Breast epithelium (tissue), 4 donors: ENCODE measurements at regions of chr6 and their contacts with region 1.

Region 1: DNA sequence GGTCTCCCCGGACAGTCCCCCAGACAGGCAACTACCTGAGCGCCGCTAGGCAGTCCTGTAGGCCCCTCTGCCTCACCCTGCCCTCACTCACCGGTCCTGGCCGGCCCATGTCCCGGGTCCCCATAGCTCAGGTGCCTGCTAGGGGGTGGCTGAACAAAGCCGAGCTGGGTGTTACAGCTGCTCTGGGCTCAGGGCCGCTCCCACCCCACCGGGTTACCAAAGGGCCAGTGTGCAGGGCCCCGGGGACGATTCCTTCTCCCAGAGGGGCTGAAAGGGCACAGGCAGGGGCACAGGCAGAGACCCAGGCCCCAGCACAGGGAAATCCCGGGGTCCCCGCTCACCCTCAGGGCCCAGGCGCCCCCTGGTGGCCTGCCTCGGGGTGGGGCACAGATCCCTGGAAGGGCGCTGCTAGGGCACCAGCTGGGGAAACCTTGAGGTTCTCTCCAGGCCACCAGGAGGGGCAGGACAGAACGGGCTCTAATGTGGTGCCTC is 118.4 kb downstream of the GRM4 start:
- DNase-seq: no peak
- H3K4me3 ChIP-seq: no peak overlapping the region
- H3K27ac ChIP-seq: no peak overlapping the region
- H3K4me1 ChIP-seq: no peaks in the 10 kb centered on the region
- H3K27me3 ChIP-seq: no peaks in the 10 kb centered on the region
- CTCF ChIP-seq: peak; percentile 56 to 82 (median 66)
- POLR2A ChIP-seq: no peak

Region 2: DNA sequence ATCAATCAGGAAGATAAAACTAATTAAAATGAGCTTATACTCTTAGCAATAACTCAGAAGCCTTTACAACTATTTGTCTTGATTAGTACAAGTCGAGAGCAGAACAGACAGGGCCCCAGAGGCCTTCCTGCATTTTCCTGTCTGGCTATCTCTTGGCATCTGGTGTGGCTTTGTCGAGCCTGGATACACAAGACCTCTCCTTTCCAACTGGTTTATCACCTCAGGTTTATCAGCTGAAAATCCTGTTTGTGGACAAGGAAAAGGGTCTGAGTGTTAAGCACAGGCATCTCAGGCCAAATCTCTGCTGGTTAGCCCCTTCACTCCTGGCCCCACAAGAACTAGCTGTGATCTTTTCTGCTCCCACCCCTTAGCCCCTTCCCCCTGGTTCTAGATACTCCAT is 480.0 kb before region 1 on chr6:
- intact Hi-C with region 1: no loop called
- DNase-seq: no peak
- H3K4me3 ChIP-seq: no peak overlapping the region
- H3K27ac ChIP-seq: no peak overlapping the region
- H3K4me1 ChIP-seq: no peaks in the 10 kb centered on the region
- H3K27me3 ChIP-seq: no peaks in the 10 kb centered on the region
- CTCF ChIP-seq: no peak
- POLR2A ChIP-seq: no peak

Region 3: DNA sequence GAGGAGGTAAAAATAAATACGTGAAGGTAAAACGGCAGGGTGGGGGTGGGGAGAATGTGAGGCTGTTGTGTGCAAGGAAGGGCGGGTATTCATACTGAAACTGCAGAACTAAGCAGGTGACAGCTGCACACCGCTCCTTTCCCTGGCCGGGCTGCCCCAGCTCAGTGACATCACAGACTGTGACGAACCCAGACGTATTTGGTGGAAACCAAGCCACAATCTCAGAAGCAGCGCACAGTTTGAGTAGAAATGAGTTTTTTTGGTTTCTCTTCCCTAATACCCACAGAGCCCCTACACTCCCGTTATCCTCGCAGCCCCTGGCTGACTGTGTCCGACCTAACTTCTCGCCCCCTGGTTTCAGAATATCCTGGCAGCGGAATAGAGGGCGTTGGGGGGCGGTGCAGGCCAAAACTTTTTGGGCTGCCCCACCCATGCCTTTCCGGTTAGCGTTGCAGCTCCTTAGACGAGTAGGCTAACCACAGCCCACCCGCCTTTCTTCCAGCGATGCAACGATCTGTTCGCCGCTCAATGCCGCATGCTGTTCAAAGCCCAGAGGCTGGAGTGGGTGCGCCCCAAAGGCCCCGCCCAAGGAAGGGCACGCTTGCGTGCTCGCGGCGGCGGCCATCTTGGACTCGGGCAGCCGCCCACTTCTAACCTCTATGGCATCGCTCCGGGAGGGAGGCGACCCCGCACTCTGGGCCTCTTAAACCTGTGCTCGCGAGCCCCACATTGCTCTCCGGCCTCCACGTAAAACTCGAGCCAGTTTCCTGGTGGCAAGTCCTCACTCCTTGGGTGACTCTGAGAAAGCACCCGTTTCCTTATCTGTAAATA is 456.5 kb before region 1 on chr6:
- intact Hi-C with region 1: loop called (anchors 5 kb)
- DNase-seq: peak; percentile 73 to 75
- H3K4me3 ChIP-seq: peak overlapping the region; percentile 55 to 68 (median 66)
- H3K27ac ChIP-seq: peak overlapping the region; percentile 89 to 93
- H3K4me1 ChIP-seq: peaks cover 0 to 6% of the 10 kb centered on the region in 2 donors
- H3K27me3 ChIP-seq: no peaks in the 10 kb centered on the region
- CTCF ChIP-seq: peak in 1 of 3 donors; percentile 27
- POLR2A ChIP-seq: no peak